IMR-90 (cell line): ENCODE measurements at regions of chr19 and their contacts with region 1.

Region 1: DNA sequence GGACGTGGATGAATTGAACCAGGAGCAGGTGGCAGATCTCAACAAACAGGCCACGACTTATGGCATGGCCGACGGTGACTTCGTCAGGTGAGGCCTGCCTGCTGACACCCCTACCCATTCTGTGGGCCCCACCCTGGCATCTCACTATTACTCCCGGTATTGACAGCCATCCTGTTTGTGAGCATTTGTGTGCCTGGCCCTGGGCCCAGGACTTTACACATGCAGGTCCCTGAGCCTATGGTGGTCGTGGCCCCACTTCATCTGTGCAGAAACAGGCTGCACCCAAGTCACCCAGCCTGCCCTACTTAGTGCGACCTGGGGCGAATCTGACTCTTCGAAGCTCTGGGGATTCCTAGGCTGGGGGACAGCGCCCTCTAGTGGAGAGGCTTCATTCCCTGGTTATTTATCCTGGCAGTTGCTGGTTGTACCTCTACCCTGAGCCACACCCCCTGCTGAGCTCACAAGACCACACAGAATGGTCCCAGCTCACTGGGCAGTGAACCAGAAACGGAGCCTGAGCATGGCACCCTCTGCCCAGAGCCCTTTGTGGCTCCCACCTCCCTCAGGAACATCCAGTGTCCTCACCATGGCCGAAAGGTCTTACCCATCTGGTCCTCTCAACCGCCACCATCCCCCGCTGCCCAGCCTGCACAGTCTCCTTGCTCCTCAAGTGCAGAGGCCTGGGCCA is 16.9 kb downstream of the ZNF296 start:
- DNase-seq: peak; percentile 69
- ATAC-seq: peak; percentile 86
- H3K4me3 ChIP-seq: no peak overlapping the region
- H3K27ac ChIP-seq: no peak overlapping the region
- H3K4me1 ChIP-seq: no peaks in the 10 kb centered on the region
- H3K27me3 ChIP-seq: no peaks in the 10 kb centered on the region
- CTCF ChIP-seq: peak; percentile 81
- POLR2A ChIP-seq: no peak
- RAD21 ChIP-seq: peak; percentile 77

Region 2: DNA sequence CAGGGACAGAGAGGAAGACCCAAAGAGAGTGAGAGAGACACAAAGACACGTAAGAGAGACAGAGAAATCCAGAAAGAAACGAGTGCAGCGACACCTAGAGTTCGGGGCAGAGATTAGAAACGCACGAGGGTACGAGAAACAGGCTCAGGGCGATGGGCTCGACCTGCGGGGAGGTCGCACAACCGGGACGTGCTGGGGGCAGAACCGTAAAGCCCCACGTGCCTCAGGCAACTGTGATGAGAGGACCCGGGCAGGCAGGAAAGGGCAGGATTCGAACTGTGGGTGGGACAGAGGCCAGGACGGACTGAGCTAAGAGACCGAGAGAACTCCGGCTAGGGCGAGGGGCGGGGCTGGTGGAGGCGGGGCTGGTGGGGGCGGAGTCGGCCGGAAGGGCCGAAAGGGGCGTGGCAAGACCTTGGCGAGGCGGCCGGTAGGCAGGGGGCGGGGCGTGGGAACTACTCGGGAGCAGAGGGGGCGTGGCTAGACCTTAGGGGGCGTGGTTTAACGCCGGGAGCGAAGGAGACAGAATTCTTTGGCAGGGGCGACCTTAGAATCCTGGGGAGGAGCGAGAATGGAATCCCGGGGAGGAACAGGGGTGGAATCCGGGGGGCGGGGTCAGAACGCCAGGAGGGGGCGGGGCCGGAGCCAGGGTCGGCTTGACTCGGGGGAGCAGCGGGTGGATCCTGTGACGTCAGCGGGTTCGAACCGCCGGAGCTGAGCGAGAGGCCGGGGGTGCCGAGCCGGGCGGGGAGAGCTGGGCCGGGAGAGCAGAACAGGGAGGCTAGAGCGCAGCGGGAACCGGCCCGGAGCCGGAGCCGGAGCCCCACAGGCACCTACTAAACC is 213.6 kb before region 1 on chr19 and contains the start of gene NECTIN2:
- CTCF ChIA-PET with region 1: no interaction called
- POLR2A ChIA-PET with region 1: no interaction called
- dilution Hi-C with region 1: no loop called
- in situ Hi-C with region 1: no loop called
- intact Hi-C with region 1: no loop called
- DNase-seq: peak; percentile 98
- ATAC-seq: peak; percentile 77
- H3K4me3 ChIP-seq: peak within 1 kb of the TSS; percentile 97
- H3K27ac ChIP-seq: peak within 1 kb of the TSS; percentile 97
- H3K4me1 ChIP-seq: peaks cover 12% of the 10 kb centered on the region
- H3K27me3 ChIP-seq: no peaks in the 10 kb centered on the region
- CTCF ChIP-seq: peak; percentile 79
- POLR2A ChIP-seq: peak; percentile 94
- RAD21 ChIP-seq: peak; percentile 56
- total RNA-seq, gene NECTIN2: 77.8 and 78.0 TPM in 2 replicates

Region 3: DNA sequence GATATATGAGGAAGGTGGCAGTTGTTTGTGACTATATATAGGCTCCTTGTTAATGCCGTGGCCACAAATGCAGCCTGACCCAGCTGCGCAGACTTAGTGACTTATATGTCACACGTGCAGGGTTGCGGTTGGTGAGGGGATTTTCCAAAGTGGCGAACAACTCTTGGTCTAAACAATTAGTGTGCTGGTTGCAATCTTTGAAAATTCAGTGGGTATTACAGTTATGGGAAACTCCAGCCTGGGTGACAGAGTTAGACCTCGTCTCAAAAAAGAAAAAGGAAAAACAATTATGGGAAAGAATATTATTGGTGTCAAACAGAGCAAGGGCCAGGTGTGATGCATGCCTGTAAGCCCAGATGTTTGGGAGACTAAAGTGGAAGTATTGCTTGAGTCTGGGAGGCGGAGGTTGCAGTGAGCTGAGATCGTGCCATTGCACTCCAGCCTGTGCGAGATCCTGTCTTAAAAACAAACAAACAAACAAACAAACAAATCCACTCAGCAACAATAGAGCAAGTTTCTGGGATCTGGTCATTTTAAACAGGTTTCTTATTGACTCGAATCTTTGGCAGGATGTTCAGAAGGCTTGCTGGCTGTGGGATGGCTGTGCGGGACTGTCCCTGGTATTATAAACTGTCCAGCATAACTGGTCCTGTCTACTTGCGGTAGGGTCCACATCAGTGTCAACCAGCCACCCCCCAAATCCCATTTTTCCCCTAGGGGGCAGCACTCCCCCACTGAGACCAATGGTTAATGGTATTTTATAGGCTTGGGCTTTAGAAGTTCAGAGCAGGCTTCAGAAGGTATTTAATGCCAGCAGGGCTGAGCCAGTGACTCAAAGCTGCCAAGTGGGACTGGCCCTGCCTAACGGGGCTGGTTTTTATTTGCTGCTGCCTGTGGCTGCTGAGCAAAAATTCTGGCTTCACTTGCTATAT is 42.8 kb before region 1 on chr19:
- CTCF ChIA-PET with region 1: no interaction called
- POLR2A ChIA-PET with region 1: no interaction called
- dilution Hi-C with region 1: no loop called
- in situ Hi-C with region 1: no loop called
- intact Hi-C with region 1: loop called (anchors 1 kb)
- DNase-seq: peak; percentile 63
- ATAC-seq: peak; percentile 96
- H3K4me3 ChIP-seq: no peak overlapping the region
- H3K27ac ChIP-seq: no peak overlapping the region
- H3K4me1 ChIP-seq: no peaks in the 10 kb centered on the region
- H3K27me3 ChIP-seq: no peaks in the 10 kb centered on the region
- CTCF ChIP-seq: peak; percentile 63
- POLR2A ChIP-seq: no peak
- RAD21 ChIP-seq: peak; percentile 59

Region 4: DNA sequence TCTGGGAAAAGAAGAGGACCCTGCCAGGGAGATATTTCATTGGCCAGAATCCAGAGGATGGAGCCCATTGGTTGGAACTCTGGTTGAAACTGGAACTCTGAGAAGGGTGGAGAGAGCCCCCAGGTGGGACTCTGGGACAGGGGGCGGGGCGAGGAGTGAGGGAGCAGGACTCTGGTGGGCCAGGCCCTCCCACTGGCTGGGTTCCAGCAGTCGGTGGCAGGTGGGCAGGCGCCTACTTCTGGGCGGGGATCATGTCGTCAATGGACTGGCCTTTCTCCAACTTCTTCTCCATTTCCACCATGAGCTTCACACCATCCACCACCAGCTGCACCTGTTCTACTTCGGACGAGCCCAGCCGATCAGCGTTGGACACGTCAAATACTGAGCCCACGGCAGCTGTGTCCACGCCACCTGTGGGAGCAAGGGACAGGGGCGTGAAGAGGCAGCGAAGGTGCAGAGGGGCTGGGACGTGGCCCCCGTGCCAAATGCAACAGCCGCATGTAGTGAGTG is 247.2 kb after region 1 on chr19:
- CTCF ChIA-PET with region 1: no interaction called
- POLR2A ChIA-PET with region 1: no interaction called
- dilution Hi-C with region 1: no loop called
- in situ Hi-C with region 1: no loop called
- intact Hi-C with region 1: no loop called
- DNase-seq: no peak
- ATAC-seq: no peak
- H3K4me3 ChIP-seq: no peak overlapping the region
- H3K27ac ChIP-seq: no peak overlapping the region
- H3K4me1 ChIP-seq: no peaks in the 10 kb centered on the region
- H3K27me3 ChIP-seq: no peaks in the 10 kb centered on the region
- CTCF ChIP-seq: no peak
- POLR2A ChIP-seq: no peak
- RAD21 ChIP-seq: no peak